Activated CD4-positive, alpha-beta T cell treated with anti-CD3 and anti-CD28 coated beads for 36 hours (primary cell): ENCODE measurements at regions of chr7 and their contacts with region 1.

Region 1: DNA sequence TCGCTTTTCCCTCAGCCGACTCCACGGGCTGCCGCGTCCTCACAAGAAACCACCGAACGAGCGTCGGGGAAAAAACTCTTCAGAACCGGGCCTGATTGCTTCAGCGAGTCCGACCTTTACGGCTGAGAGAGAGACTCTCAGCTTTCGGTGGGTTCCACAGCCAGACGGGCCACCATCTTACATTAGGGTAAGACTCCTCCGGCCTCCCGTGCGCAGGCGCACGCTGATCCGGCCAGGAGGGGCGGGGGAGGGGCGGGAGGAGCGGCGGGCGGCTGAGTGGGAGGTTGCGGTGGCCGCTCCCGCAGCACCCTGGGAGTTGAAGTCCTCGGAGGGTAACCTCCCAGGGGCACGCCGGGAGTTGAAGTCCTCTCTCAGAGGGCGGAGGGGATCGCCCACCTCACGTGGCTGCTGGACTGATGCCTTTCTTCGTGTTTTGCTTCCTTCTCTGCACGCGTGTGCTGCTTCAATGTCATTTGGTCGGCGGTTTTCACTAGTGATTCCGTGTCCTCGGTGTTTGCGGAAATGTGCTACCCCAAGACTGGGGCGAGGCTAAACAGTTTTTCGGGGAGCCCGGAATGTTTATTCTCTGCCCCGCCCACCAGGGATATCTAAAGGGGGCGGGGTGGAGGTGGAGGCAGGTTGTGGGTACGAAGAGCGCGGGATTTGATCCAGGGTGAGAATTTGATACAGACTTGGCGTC is at the start of gene CNOT4:
- DNase-seq: peak; percentile 98
- ATAC-seq: peak; percentile 94
- H3K4me3 Mint-ChIP-seq: no peak within 1 kb of the TSS
- H3K27ac Mint-ChIP-seq: no peak within 1 kb of the TSS
- H3K4me1 Mint-ChIP-seq: peaks cover 17% of the 10 kb centered on the region
- H3K27me3 Mint-ChIP-seq: no peaks in the 10 kb centered on the region
- total RNA-seq, gene CNOT4: 17.7 to 22.6 TPM

Region 2: GRCh38 chr7:134646425-134647305 is 863.4 kb before region 1 on chr7 and contains the start of gene BPGM:
- CTCF ChIA-PET with region 1: no interaction called
- POLR2A ChIA-PET with region 1: no interaction called
- intact Hi-C with region 1: loop called in 1 of 2 experiments (anchors 1 kb)
- DNase-seq: peak; percentile 97
- ATAC-seq: peak; percentile 99
- H3K4me3 Mint-ChIP-seq: no peak within 1 kb of the TSS
- H3K27ac Mint-ChIP-seq: no peak within 1 kb of the TSS
- H3K4me1 Mint-ChIP-seq: peaks cover 44% of the 10 kb centered on the region
- H3K27me3 Mint-ChIP-seq: no peaks in the 10 kb centered on the region
- total RNA-seq, gene BPGM: 17.5 to 18.6 TPM

Region 3: GRCh38 chr7:134920026-134920753 is 589.9 kb before region 1 on chr7:
- CTCF ChIA-PET with region 1: no interaction called
- POLR2A ChIA-PET with region 1: no interaction called
- intact Hi-C with region 1: no loop called
- DNase-seq: no peak
- ATAC-seq: peak; percentile 85
- H3K4me3 Mint-ChIP-seq: no peak overlapping the region
- H3K27ac Mint-ChIP-seq: no peak overlapping the region
- H3K4me1 Mint-ChIP-seq: peaks cover 19% of the 10 kb centered on the region
- H3K27me3 Mint-ChIP-seq: no peaks in the 10 kb centered on the region

Region 4: DNA sequence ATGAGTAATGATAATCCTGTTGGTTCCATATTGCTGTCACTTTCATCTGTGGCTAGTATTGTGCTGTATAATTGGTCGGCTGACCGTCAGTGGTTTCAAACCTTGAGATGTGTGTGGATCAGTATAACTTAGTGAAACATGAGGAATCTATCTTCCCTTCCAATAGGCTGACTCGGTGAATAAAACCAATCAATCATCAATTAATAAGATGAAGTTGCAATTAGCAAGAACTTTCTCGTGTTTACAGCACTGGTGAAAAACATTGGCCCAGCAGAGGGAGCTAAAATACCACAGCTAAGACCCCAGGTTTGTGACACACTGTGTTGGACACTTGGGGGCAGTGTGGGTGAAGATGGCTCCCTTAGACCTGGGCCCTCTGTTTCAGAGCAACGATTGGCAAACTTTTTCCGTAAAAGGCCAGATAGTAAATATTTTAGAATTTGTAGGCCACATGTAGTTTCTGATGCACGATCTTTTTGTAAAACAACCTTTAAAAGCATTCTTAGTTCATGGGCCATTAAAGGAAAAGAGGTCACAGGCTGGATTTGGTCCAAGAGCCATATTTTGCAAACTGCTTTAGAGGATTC is 228.6 kb before region 1 on chr7:
- CTCF ChIA-PET with region 1: no interaction called
- POLR2A ChIA-PET with region 1: no interaction called
- intact Hi-C with region 1: loop called (anchors 1 kb)
- DNase-seq: peak; percentile 89
- ATAC-seq: peak; percentile 99
- H3K4me3 Mint-ChIP-seq: no peak overlapping the region
- H3K27ac Mint-ChIP-seq: no peak overlapping the region
- H3K4me1 Mint-ChIP-seq: peaks cover 15% of the 10 kb centered on the region
- H3K27me3 Mint-ChIP-seq: peaks cover 9% of the 10 kb centered on the region

Region 5: DNA sequence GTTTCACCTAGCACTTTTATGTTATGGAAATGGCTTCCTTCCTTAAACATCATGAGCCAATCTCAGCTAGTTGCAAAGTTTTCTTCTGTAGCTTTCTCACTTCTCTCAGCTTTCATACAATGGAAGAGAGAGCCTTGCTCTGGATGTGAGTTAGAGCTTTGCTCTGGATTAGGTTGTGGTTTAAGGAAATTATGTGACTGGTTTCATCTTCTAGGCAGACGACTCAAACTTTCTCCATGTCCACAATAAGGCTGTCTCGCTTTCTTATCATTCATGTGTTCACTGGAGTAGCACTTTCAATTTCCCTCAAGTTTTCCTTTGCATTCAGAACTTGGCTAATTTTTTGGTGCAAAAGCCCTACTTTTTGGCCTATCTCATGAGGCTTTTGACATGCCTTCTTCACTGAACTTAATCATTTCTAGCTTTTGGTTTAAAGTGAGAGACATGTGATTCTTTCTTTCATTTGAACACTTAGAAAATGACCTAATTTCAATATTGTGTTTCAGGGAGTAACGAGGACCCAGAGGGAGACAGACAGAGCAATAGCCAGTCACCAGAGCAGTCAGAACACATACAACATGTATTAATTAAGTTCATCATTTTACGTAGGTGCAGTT is 50.0 kb before region 1 on chr7:
- CTCF ChIA-PET with region 1: no interaction called
- POLR2A ChIA-PET with region 1: no interaction called
- intact Hi-C with region 1: loop called in 1 of 2 experiments (anchors 2 kb)
- DNase-seq: peak; percentile 18
- ATAC-seq: peak; percentile 72
- H3K4me3 Mint-ChIP-seq: no peak overlapping the region
- H3K27ac Mint-ChIP-seq: peak overlapping the region; percentile 27
- H3K4me1 Mint-ChIP-seq: peaks cover 45% of the 10 kb centered on the region
- H3K27me3 Mint-ChIP-seq: no peaks in the 10 kb centered on the region

Region 6: DNA sequence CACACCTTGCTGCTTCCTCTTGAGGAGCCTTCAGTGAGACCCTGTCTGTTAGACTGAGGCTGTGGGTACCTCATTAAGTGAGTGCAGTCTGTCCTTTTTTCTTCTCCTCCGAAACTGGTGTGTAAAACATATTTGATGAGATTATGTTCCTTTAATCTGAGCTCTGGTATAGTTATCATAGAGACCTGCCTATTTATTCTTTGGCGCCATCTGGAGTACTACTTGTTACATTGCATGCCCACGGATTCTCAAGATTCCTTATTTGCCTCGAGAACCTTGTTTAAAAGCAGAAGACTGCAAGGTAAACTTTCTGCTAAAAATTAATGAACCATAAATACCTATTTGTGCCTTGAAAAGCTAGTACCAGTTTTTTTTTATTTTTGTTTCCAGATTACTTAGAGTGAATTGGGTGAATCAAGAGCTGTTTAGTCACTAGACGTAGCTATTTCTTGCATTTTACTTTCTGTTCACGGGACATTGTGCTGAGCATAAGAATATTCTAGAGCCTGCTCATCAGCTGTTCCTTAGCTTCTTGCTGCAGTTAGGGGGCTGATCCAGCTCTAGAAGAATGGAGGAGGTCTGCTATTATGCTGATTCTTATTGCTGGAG is 135.3 kb after region 1 on chr7:
- CTCF ChIA-PET with region 1: interaction called, 4 read pairs
- POLR2A ChIA-PET with region 1: no interaction called
- intact Hi-C with region 1: loop called (anchors 1 to 2 kb)
- DNase-seq: no peak
- ATAC-seq: peak; percentile 58
- H3K4me3 Mint-ChIP-seq: no peak overlapping the region
- H3K27ac Mint-ChIP-seq: no peak overlapping the region
- H3K4me1 Mint-ChIP-seq: no peaks in the 10 kb centered on the region
- H3K27me3 Mint-ChIP-seq: no peaks in the 10 kb centered on the region